ENCODE measurements at regions of chr2 and their contacts with region 1.

Region 1: DNA sequence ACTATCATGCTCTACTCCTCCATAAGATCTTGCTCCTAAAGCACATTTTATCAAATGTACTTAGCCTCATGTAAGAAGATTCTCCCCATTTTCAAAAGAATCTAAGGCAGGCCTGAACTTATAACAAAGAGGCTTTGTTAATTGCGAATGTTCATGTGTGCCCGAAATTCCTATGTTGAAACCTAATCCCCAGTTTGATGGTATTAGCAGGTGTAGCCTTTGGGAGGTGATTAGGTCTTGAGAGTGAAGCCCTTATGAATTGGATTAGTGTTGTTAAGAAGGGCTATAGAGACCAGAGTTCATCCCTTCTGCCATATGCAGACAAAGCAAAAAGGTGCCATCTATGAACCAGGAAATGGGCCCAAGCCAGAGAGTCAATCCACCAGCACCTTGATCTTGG is 234.5 kb downstream of the PAX3 start:
- DNase-seq: no peak
- ATAC-seq: no peak
- H3K4me3 ChIP-seq: no peak overlapping the region
- H3K27ac ChIP-seq: no peak overlapping the region
- H3K4me1 ChIP-seq: no peaks in the 10 kb centered on the region
- H3K27me3 ChIP-seq: no peaks in the 10 kb centered on the region

Region 2: DNA sequence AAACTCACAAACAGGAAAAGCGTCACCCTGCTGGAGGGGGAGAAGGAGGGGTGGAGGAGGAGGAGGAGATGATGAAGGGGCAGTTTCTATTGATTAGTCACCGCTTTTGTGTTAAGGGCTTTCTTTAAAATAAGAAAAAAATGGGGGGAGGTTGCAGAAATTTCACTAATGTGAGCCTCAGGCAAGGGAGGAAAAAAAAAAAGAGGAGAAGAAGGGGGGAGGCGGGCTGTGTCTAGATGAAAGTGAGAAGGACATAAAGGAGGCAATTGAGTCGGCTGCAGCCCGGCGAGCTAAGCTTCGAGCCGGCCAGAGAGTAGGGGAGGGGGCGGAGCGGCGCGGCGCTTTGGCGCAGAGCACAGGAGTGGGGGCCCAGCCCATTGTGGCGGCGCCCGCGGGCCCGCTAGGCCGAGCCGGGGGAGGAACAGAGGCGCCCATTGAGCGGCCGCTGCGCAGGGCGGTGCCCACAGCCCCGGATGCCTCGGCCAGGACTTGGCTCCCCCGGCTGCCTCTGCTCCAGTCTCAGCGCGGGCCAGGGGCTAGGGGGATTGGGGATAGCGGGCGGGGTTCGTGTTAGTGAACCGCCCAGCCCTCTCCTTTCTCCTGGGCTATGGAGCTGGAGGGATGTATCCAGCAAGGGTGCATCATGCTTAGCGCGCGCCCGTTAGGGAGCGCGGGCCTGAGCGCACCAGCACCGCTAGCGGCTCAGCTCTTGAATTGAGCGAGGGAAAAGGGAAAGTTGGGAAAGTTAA is 226.6 kb after region 1 on chr2:
- intact Hi-C with region 1: loop called in 1 of 4 experiments (anchors 10 kb)
- DNase-seq: peak in 1 of 3 donors; percentile 49
- ATAC-seq: peak; percentile 38 to 54
- H3K4me3 ChIP-seq: no peak overlapping the region
- H3K27ac ChIP-seq: no peak overlapping the region
- H3K4me1 ChIP-seq: no peaks in the 10 kb centered on the region
- H3K27me3 ChIP-seq: peaks cover 19% of the 10 kb centered on the region

Measured in right cardiac atrium (tissue), 5 donors.